ENCODE measurements at regions of chr3 and their contacts with region 1.

Region 1: GRCh38 chr3:180898572-180898971 is 13.9 kb upstream of the FXR1 start:
- DNase-seq: peak in 1 of 4 experiments; percentile 31
- ATAC-seq: peak; percentile 48; the same call in 1 of the 3 replicates
- H3K4me3 ChIP-seq: no peak overlapping the region
- H3K27ac ChIP-seq: no peak overlapping the region
- H3K4me1 ChIP-seq: no peaks in the 10 kb centered on the region; a peak in 1 of 5 replicates
- H3K27me3 ChIP-seq: no peaks in the 10 kb centered on the region
- CTCF ChIP-seq: no peak
- EP300 ChIP-seq: no peak
- POLR2A ChIP-seq: no peak
- RAD21 ChIP-seq: no peak

Region 2: GRCh38 chr3:180912304-180913296 is 14.0 kb after region 1 on chr3 and contains the start of gene FXR1:
- CTCF ChIA-PET with region 1: no interaction called
- POLR2A ChIA-PET with region 1: interaction called, 15 read pairs
- in situ Hi-C with region 1: no loop called
- intact Hi-C with region 1: no loop called
- DNase-seq: peak; percentile 87 to 91 (median 90)
- ATAC-seq: peak; percentile 96
- H3K4me3 ChIP-seq: peak within 1 kb of the TSS; percentile 99
- H3K27ac ChIP-seq: peak within 1 kb of the TSS; percentile 100
- H3K4me1 ChIP-seq: peaks cover 3 to 12% of the 10 kb centered on the region in 2 experiments; a peak in 3 of 5 replicates
- H3K27me3 ChIP-seq: no peaks in the 10 kb centered on the region
- CTCF ChIP-seq: peak; percentile 49 to 70 (median 50); a peak in 5 of 6 replicates
- EP300 ChIP-seq: no peak
- POLR2A ChIP-seq: peak; percentile 95
- RAD21 ChIP-seq: peak in 1 of 2 experiments; percentile 20; a peak in 1 of 4 replicates
- polyA plus RNA-seq, gene FXR1: 59.4 to 81.1 TPM